ENCODE measurements at regions of chr18 and their contacts with region 1.

Region 1: DNA sequence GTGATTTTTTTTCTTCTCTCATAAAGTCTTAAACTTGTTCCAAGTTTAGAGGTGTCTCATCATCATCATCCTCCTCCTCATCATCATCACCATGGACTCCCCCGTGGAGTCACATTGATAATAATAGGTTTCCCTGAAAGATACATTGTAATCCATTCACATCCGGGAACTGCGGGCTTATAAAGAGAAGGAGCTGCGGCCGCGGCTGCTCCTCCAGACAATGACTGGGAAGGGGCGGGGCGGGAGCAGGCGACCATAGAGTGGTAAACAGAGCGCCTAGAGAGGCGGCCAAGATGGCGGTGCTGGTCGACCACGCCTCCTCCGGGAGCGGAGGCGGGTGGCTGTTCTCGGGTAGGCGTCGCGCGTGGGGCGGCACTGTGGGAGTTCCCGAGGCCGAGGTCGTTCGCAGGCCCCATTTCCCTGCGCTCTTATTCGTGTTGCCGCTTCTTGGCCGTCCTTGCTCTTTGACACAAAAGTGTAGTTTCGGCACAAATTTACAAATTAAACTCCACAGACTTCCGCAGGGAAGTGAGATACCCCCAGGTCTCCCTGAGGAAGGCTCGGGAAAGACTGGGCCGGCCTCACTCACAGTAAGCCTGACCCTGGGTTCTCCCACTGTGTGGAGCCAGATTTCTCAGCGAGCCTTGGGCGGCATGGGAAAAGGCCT is 1.8 kb upstream of the TCF4 start:
- DNase-seq: peak; percentile 92
- H3K4me3 ChIP-seq: peak overlapping the region; percentile 31
- H3K27ac ChIP-seq: peak overlapping the region; percentile 44
- H3K4me1 ChIP-seq: no peaks in the 10 kb centered on the region
- H3K27me3 ChIP-seq: peaks cover 5% of the 10 kb centered on the region
- CTCF ChIP-seq: no peak

Region 2: GRCh38 chr18:55405893-55406406 is 183.8 kb before region 1 on chr18:
- intact Hi-C with region 1: loop called (anchors 10 kb)
- DNase-seq: peak; percentile 47
- H3K4me3 ChIP-seq: no peak overlapping the region
- H3K27ac ChIP-seq: no peak overlapping the region
- H3K4me1 ChIP-seq: no peaks in the 10 kb centered on the region
- H3K27me3 ChIP-seq: no peaks in the 10 kb centered on the region
- CTCF ChIP-seq: no peak

Region 3: DNA sequence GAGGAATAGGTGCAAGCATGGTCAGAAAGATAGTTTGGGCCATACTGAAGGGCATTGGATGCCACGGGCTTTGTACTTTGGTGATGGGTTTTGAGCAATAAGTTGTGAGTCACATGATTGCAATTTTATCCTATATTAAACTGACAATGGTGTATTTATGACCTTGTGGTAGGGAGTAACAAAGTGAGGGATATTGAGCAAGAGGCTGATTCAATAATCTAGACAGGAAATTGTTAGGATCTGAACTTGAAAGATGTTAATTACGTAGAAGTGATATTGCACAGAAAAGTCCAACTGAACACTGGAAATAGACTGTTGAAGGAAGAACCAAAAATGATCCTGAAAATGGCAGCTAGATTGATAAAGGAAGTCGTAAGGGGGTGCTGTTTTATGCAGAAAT is 44.8 kb after region 1 on chr18:
- intact Hi-C with region 1: no loop called
- DNase-seq: no peak
- H3K4me3 ChIP-seq: no peak overlapping the region
- H3K27ac ChIP-seq: no peak overlapping the region
- H3K4me1 ChIP-seq: no peaks in the 10 kb centered on the region
- H3K27me3 ChIP-seq: no peaks in the 10 kb centered on the region
- CTCF ChIP-seq: no peak

Region 4: DNA sequence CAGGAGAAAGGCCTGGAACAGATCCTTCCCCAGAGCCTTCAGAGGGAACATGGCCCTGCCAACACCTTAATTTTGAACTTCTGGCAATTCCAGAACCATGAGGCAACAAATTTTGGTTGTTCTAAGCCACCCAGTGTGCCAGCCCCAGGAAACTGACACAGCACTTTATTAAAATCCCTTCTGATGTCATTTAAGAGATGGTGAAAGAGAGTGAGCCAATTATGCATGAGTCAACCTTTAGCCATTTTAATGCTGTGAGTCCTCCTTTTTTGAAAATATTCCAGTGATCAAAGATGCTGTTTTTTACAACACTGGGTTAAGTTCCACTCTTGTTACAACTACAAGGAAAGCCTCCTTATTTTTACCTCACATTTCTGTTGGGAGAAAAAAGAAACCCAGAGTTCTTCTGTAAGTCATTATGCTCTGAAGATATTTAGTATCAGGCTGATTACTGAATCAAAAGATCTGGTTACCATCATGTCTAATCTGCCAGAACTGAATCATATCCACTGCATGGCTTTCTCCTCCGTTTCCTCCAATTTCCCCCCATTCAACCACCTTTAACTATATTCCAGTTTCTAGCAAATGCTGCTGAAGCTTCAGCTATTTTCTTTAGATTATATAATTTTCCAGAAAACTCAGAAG is 813.2 kb after region 1 on chr18:
- intact Hi-C with region 1: no loop called
- DNase-seq: no peak
- H3K4me3 ChIP-seq: no peak overlapping the region
- H3K27ac ChIP-seq: no peak overlapping the region
- H3K4me1 ChIP-seq: no peaks in the 10 kb centered on the region
- H3K27me3 ChIP-seq: no peaks in the 10 kb centered on the region
- CTCF ChIP-seq: no peak